A673 (cell line): ENCODE measurements at regions of chr12 and their contacts with region 1.

Region 1: DNA sequence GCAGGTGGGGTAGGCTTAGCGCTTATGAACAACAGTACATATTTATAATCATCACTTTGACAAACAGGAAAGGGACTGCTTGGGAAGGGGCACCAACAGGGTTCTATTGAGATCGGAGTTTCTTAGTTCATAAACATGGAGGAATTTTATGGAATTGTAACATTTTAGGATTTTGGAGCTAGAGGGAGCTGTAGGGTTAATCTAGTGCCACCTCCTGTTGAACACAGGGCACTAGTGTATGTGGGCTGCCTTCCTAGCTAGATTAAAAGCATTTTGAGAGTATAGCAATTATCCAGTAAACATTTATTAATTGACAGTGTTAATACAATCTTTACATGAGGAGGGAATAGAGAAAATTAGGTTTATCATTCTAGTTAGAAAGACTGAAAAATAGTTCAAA is 23.1 kb upstream of the TBC1D30 start:
- DNase-seq: peak; percentile 33
- H3K4me3 ChIP-seq: no peak overlapping the region
- H3K27ac ChIP-seq: no peak overlapping the region
- H3K4me1 ChIP-seq: no peaks in the 10 kb centered on the region
- H3K27me3 ChIP-seq: no peaks in the 10 kb centered on the region
- CTCF ChIP-seq: peak; percentile 53

Region 2: GRCh38 chr12:64099397-64099796 is 702.0 kb before region 1 on chr12:
- CTCF ChIA-PET with region 1: no interaction called
- POLR2A ChIA-PET with region 1: no interaction called
- intact Hi-C with region 1: no loop called
- DNase-seq: no peak
- H3K4me3 ChIP-seq: no peak overlapping the region
- H3K27ac ChIP-seq: no peak overlapping the region
- H3K4me1 ChIP-seq: peaks cover 3% of the 10 kb centered on the region
- H3K27me3 ChIP-seq: no peaks in the 10 kb centered on the region
- CTCF ChIP-seq: no peak

Region 3: DNA sequence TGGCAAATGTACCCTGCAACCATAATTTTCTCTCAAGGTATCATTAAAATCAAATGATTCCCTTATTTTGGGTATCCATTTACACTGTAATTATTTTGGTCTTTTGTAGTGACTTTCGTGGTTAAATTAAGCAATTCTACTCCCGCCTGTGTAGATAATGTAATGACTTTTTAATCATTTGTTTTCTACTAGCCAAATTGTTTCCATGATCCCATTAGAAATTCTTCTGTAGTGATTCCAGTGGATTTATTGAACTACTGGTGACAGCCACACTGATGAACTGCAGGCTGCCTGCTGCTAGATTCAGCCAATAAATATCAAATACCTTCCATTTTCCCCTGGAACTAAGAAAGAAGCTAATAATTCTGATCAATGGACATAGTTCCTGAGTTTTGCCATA is 223.8 kb after region 1 on chr12:
- CTCF ChIA-PET with region 1: no interaction called
- POLR2A ChIA-PET with region 1: no interaction called
- intact Hi-C with region 1: no loop called
- DNase-seq: no peak
- H3K4me3 ChIP-seq: no peak overlapping the region
- H3K27ac ChIP-seq: no peak overlapping the region
- H3K4me1 ChIP-seq: no peaks in the 10 kb centered on the region
- H3K27me3 ChIP-seq: peaks cover 5% of the 10 kb centered on the region
- CTCF ChIP-seq: no peak

Region 4: GRCh38 chr12:65106948-65107347 is 305.6 kb after region 1 on chr12:
- CTCF ChIA-PET with region 1: interaction called, 8 read pairs
- POLR2A ChIA-PET with region 1: no interaction called
- intact Hi-C with region 1: loop called (anchors 5 kb)
- DNase-seq: no peak
- H3K4me3 ChIP-seq: no peak overlapping the region
- H3K27ac ChIP-seq: no peak overlapping the region
- H3K4me1 ChIP-seq: no peaks in the 10 kb centered on the region
- H3K27me3 ChIP-seq: peaks cover 8% of the 10 kb centered on the region
- CTCF ChIP-seq: peak; percentile 54; the same call in 1 of the 2 replicates

Region 5: GRCh38 chr12:65121049-65121955 is 319.9 kb after region 1 on chr12 and contains the start of gene WIF1:
- CTCF ChIA-PET with region 1: no interaction called
- POLR2A ChIA-PET with region 1: no interaction called
- intact Hi-C with region 1: loop called (anchors 5 kb)
- DNase-seq: peak; percentile 60
- H3K4me3 ChIP-seq: peak within 1 kb of the TSS; percentile 40
- H3K27ac ChIP-seq: no peak within 1 kb of the TSS
- H3K4me1 ChIP-seq: peaks cover 8% of the 10 kb centered on the region
- H3K27me3 ChIP-seq: peaks cover 84% of the 10 kb centered on the region
- CTCF ChIP-seq: peak; percentile 65
- total RNA-seq, gene WIF1: not detected in 2 replicates